A673 (cell line): ENCODE measurements at regions of chr14 and their contacts with region 1.

Region 1: GRCh38 chr14:64232095-64232838 is 61.9 kb downstream of the ESR2 start:
- DNase-seq: no peak
- H3K4me3 ChIP-seq: no peak overlapping the region
- H3K27ac ChIP-seq: no peak overlapping the region
- H3K4me1 ChIP-seq: no peaks in the 10 kb centered on the region
- H3K27me3 ChIP-seq: no peaks in the 10 kb centered on the region
- CTCF ChIP-seq: no peak

Region 2: DNA sequence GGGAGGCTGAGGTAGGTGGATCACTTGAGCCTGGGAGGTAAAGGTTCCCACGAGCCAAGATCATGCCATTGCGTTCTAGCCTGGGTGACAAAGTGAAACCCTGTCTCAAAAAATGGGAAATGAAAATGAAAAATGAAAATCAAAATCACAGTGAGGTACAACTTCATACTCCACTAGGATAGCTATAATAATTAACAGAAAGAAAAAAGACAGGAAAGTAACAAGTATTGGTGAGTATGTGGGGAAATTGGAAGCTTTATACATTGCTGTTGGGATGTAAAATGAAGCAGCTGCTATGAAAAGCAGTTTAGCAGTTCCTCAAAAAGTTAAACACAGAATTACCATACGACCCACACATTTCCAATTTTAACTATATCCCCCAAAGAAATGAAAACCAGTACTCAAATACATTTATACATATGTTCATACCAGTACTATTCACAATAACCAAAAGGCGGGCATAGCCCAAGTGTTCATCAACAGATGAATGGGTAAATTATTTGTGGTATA is 526.7 kb before region 1 on chr14:
- CTCF ChIA-PET with region 1: no interaction called
- POLR2A ChIA-PET with region 1: interaction called, 20 read pairs
- intact Hi-C with region 1: no loop called
- DNase-seq: no peak
- H3K4me3 ChIP-seq: no peak overlapping the region
- H3K27ac ChIP-seq: no peak overlapping the region
- H3K4me1 ChIP-seq: no peaks in the 10 kb centered on the region
- H3K27me3 ChIP-seq: no peaks in the 10 kb centered on the region
- CTCF ChIP-seq: no peak